Activated T-helper 2 cell treated with anti-CD3 and anti-CD28 coated beads, Interferon-gamma antibody, Interleukin-2, Interleukin-4, amounts not matched to agents 10 μg/mL and 5 μg/mL and 100 μg/mL, durations not matched to agents 14 hours and 24 hours and 36 hours (primary cell): ENCODE measurements at regions of chr1 and their contacts with region 1.

Region 1: GRCh38 chr1:155063550-155064110 is at the start of gene EFNA4:
- DNase-seq: peak; percentile 84
- H3K4me3 Mint-ChIP-seq: peak within 1 kb of the TSS; percentile 96
- H3K27ac Mint-ChIP-seq: peak within 1 kb of the TSS; percentile 68
- H3K4me1 Mint-ChIP-seq: peaks cover 21% of the 10 kb centered on the region
- H3K27me3 Mint-ChIP-seq: no peaks in the 10 kb centered on the region
- total RNA-seq, gene EFNA4: 9.2 and 10.5 TPM in 2 replicates

Region 2: DNA sequence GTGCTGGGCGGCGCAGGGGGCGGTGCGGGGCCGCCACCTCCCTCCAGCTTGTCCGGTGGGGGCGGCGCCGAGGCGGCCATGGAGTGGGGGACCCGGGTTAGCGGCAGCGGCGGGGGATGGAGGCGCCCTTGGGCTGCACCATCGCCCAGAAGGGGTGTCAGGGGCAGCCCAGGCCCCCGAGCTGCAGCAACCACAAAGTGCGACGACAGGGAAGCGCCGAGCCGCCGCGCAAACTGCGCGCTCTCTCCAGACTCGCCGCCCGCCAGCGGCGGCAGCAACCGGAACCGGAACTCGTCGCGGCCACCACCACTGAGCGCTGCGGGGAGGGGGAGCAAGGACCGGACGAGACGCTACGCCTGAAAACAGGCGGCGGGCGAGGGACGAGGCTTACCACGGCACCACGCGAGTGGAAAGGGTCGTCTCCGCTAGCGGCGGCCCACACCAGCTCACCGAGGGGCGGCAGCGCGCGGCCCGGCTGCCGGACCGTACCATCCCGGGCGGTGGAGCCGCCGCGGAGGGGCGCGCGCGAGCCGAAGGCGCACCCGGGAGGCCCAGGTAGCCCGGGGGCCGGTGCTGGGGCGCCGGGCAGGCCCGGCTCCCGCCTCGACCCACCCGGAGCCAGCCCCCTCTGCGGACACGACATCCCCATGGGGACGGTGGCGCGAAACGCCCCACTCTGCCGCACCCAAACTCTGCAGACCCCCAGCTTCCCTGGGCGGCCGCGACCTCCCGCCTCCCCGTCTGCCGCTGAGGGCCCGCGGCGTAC is 102.0 kb before region 1 on chr1 and contains the start of gene PYGO2:
- intact Hi-C with region 1: loop called (anchors 5 kb)
- DNase-seq: peak; percentile 82
- H3K4me3 Mint-ChIP-seq: peak within 1 kb of the TSS; percentile 94
- H3K27ac Mint-ChIP-seq: peak within 1 kb of the TSS; percentile 84
- H3K4me1 Mint-ChIP-seq: peaks cover 22% of the 10 kb centered on the region
- H3K27me3 Mint-ChIP-seq: no peaks in the 10 kb centered on the region
- total RNA-seq, gene PYGO2: 30.4 and 30.6 TPM in 2 replicates

Region 3: GRCh38 chr1:155044812-155045690 is 18.6 kb before region 1 on chr1:
- intact Hi-C with region 1: loop called (anchors 1 kb)
- DNase-seq: peak; percentile 51
- H3K4me3 Mint-ChIP-seq: no peak overlapping the region
- H3K27ac Mint-ChIP-seq: peak overlapping the region; percentile 44
- H3K4me1 Mint-ChIP-seq: peaks cover 17% of the 10 kb centered on the region
- H3K27me3 Mint-ChIP-seq: no peaks in the 10 kb centered on the region

Region 4: DNA sequence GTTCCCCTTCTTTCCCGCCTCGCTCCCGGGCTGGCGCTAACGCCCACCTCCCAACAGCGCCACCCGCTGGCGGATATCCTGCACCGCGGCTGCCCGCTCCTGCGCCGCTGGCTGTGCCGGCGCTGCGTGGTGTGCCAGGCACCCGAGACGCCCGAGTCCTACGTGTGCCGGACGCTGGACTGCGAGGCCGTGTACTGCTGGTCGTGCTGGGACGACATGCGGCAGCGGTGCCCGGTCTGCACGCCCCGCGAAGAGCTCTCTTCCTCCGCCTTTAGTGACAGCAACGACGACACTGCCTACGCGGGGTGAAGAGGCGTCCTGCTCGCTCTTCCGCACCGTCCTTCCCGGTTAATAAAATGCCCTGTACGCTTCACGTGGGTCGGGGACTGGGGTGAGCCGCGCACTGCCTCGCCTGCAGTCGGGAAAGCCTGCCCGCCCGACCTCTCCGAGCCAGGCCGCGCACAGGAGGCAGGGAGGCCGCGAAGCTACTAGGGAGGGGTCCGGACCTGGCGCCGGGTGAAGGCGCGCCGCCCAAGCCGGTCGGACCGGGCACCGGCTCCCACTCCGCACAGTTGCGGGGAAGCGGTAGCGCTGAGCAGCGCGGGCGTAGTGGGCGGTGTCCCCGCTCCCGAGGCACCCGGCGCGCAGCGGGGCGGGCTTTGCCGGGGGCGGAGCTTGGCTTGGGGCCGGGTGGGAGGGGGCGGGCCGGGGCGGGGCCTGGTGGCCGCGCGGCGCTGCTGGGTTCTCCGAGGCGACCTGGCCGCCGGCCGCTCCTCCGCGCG is 12.9 kb before region 1 on chr1 and contains the start of gene ADAM15:
- intact Hi-C with region 1: loop called (anchors 1 kb)
- DNase-seq: peak; percentile 75
- H3K4me3 Mint-ChIP-seq: peak within 1 kb of the TSS; percentile 84
- H3K27ac Mint-ChIP-seq: peak within 1 kb of the TSS; percentile 79
- H3K4me1 Mint-ChIP-seq: peaks cover 24% of the 10 kb centered on the region
- H3K27me3 Mint-ChIP-seq: no peaks in the 10 kb centered on the region
- total RNA-seq, gene ADAM15: 72.0 and 74.8 TPM in 2 replicates